Left lung (tissue), 14 donors: ENCODE measurements at regions of chr2 and their contacts with region 1.

Region 1: GRCh38 chr2:19362755-19363473 is 4.5 kb upstream of the OSR1 start:
- DNase-seq: peak; percentile 77 to 93 (median 86)
- ATAC-seq: peak; percentile 79
- H3K4me3 ChIP-seq: peak overlapping the region; percentile 45 to 52
- H3K27ac ChIP-seq: peak overlapping the region; percentile 7 to 48
- H3K4me1 ChIP-seq: peaks cover 4 to 22% of the 10 kb centered on the region in 2 donors
- H3K27me3 ChIP-seq: peaks cover 38 to 95% of the 10 kb centered on the region in 2 donors
- CTCF ChIP-seq: peak; percentile 78 to 80

Region 2: GRCh38 chr2:18520451-18521425 is 842.2 kb before region 1 on chr2:
- intact Hi-C with region 1: loop called in 1 of 2 experiments (anchors 10 kb)
- DNase-seq: peak; percentile 66 to 92 (median 86)
- ATAC-seq: peak; percentile 93
- H3K4me3 ChIP-seq: no peak overlapping the region
- H3K27ac ChIP-seq: no peak overlapping the region
- H3K4me1 ChIP-seq: peaks cover 5% of the 10 kb centered on the region in 2 donors
- H3K27me3 ChIP-seq: no peaks in the 10 kb centered on the region
- CTCF ChIP-seq: peak; percentile 78 to 83

Region 3: GRCh38 chr2:18987592-18988073 is 375.3 kb before region 1 on chr2:
- intact Hi-C with region 1: loop called in 1 of 2 experiments (anchors 10 kb)
- DNase-seq: peak in 3 of 4 donors; percentile 70 to 85 (median 71)
- ATAC-seq: peak; percentile 48
- H3K4me3 ChIP-seq: no peak overlapping the region
- H3K27ac ChIP-seq: peak overlapping the region in 1 of 2 donors; percentile 22
- H3K4me1 ChIP-seq: peaks cover 4 to 8% of the 10 kb centered on the region in 2 donors
- H3K27me3 ChIP-seq: no peaks in the 10 kb centered on the region
- CTCF ChIP-seq: no peak

Region 4: DNA sequence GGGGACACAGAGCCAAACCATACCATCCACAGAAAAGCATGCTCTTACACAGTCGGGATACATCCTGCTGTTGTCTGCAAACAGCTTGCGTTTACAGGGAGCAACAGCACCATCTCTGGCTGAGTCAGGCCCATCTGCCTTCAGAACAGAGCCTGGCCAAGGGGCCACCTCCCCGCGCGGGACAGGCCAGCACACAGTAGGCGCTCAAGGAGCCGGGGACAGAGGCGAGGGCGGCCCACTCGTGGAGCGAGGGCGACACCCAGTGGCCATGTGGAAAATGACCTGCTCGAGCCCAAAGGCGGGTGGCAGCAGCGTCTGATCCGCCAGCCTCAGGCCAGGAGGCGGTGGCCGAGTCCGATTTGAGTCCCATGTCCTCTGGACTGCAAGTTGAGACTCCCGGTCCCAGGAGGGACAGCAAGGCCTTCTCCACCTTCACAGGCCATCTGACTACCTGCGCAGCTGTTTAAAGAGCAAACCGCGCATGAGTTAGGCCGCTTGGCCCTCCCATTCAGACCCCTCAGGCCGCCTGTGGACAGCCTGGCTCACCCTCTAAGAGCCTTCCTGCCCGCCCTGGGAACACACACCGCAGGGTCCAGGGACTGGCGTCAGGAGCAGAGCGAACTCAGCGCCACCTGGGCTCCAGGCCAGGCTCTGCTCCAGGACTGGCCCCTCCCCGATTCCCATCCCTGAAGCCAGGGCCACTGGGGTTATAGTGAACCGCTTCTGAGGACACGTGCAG is 500.6 kb after region 1 on chr2:
- intact Hi-C with region 1: loop called in 1 of 2 experiments (anchors 10 kb)
- DNase-seq: peak; percentile 59 to 95 (median 70)
- ATAC-seq: peak; percentile 95
- H3K4me3 ChIP-seq: no peak overlapping the region
- H3K27ac ChIP-seq: no peak overlapping the region
- H3K4me1 ChIP-seq: peaks cover 2 to 11% of the 10 kb centered on the region in 2 donors
- H3K27me3 ChIP-seq: peaks cover 0 to 17% of the 10 kb centered on the region in 2 donors
- CTCF ChIP-seq: peak; percentile 95 to 96